ENCODE measurements at regions of chr3 and their contacts with region 1.

Region 1: GRCh38 chr3:32467333-32468070 is 35.1 kb downstream of the CMTM6 start:
- DNase-seq: peak; percentile 64
- H3K4me3 ChIP-seq: peak overlapping the region in 1 of 3 experiments; percentile 33
- H3K27ac ChIP-seq: peak overlapping the region; percentile 23
- H3K4me1 ChIP-seq: peaks cover 55% of the 10 kb centered on the region
- H3K27me3 ChIP-seq: no peaks in the 10 kb centered on the region
- CTCF ChIP-seq: peak; percentile 93 to 98

Region 2: GRCh38 chr3:32374788-32375595 is 92.5 kb before region 1 on chr3:
- CTCF ChIA-PET with region 1: interaction called, 3 read pairs
- dilution Hi-C with region 1: no loop called
- in situ Hi-C with region 1: no loop called
- intact Hi-C with region 1: loop called (anchors 1 kb)
- DNase-seq: peak; percentile 66
- H3K4me3 ChIP-seq: no peak overlapping the region
- H3K27ac ChIP-seq: no peak overlapping the region
- H3K4me1 ChIP-seq: peaks cover 10% of the 10 kb centered on the region
- H3K27me3 ChIP-seq: no peaks in the 10 kb centered on the region
- CTCF ChIP-seq: peak; percentile 50 to 68

Region 3: DNA sequence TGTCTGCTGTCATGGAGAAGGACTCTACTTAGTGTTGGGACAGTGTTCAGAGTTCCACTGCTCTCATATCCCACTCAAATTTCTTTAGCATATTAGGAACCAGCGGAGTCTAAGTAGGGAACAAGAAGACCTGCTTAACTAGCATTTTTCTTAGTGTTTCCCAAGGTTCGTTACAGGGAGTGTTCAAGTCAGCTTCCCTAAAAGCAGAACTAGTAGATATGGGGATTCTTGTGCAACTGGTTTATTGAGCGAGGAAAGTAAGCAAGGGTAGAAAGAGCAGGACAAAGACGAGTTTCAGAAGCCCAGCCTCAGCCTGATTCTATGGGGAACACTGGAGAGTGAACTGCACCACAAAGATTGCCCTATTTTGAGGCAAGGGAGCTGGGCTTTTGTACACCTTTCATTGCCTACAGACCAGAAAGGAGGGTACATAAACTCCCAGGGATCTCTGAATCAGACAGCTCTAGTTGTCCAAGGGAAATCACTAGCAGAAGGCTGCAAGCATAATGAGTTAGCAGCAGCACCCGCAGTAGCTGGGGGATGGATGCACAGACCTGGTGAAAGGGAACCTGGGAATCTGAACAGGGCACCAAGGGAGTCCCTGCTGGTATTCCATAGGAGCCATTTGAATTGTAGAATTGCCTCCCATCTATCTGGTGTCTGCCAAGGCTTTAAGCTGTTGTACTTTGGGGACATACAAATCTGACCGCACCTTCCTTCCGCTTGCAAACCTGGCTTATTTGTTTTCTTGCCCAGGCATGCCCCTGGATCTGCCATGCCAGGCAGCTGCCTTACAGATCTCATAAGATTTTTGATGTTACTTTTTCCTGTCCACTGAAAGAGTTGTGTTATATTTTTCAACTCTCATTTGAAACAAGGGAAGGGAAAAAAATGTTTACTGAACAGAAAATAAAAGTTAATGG is 60.8 kb before region 1 on chr3:
- CTCF ChIA-PET with region 1: interaction called, 5 read pairs
- dilution Hi-C with region 1: no loop called
- in situ Hi-C with region 1: no loop called
- intact Hi-C with region 1: loop called (anchors 1 kb)
- DNase-seq: peak; percentile 82
- H3K4me3 ChIP-seq: no peak overlapping the region
- H3K27ac ChIP-seq: peak overlapping the region; percentile 83
- H3K4me1 ChIP-seq: peaks cover 78% of the 10 kb centered on the region
- H3K27me3 ChIP-seq: no peaks in the 10 kb centered on the region
- CTCF ChIP-seq: no peak

Region 4: GRCh38 chr3:32420126-32421038 is 47.1 kb before region 1 on chr3:
- CTCF ChIA-PET with region 1: interaction called, 9 read pairs
- dilution Hi-C with region 1: loop called (anchors 5 kb)
- in situ Hi-C with region 1: no loop called
- intact Hi-C with region 1: loop called (anchors 1 kb)
- DNase-seq: peak; percentile 98
- H3K4me3 ChIP-seq: peak overlapping the region in 1 of 3 experiments; percentile 5
- H3K27ac ChIP-seq: peak overlapping the region; percentile 95
- H3K4me1 ChIP-seq: peaks cover 54% of the 10 kb centered on the region
- H3K27me3 ChIP-seq: no peaks in the 10 kb centered on the region
- CTCF ChIP-seq: peak; percentile 37 to 46

Region 5: GRCh38 chr3:32502118-32502945 is 34.8 kb after region 1 on chr3 and contains the start of gene CMTM6:
- CTCF ChIA-PET with region 1: no interaction called
- dilution Hi-C with region 1: no loop called
- in situ Hi-C with region 1: no loop called
- intact Hi-C with region 1: loop called (anchors 2 kb)
- DNase-seq: peak; percentile 72
- H3K4me3 ChIP-seq: peak within 1 kb of the TSS; percentile 71 to 92 (median 76)
- H3K27ac ChIP-seq: peak within 1 kb of the TSS; percentile 77
- H3K4me1 ChIP-seq: peaks cover 3% of the 10 kb centered on the region
- H3K27me3 ChIP-seq: no peaks in the 10 kb centered on the region
- CTCF ChIP-seq: peak in 1 of 2 donors; percentile 4
- total RNA-seq, gene CMTM6: 70.0 to 174 TPM